Heart right ventricle (tissue), 16 donors: ENCODE measurements at regions of chr22 and their contacts with region 1.

Region 1: GRCh38 chr22:20298803-20299735 is 20.8 kb downstream of the DGCR6L start:
- DNase-seq: peak; percentile 81 to 86
- ATAC-seq: peak; percentile 84 to 92 (median 90)
- H3K4me3 ChIP-seq: peak overlapping the region; percentile 22 to 70 (median 58)
- H3K27ac ChIP-seq: peak overlapping the region in 1 of 10 donors; percentile 39
- H3K4me1 ChIP-seq: peaks cover 5 to 16% (median 13%) of the 10 kb centered on the region in 9 donors
- H3K27me3 ChIP-seq: peaks cover 8 to 41% (median 17%) of the 10 kb centered on the region in 7 donors
- CTCF ChIP-seq: no peak

Region 2: GRCh38 chr22:20164863-20165262 is 134.2 kb before region 1 on chr22:
- intact Hi-C with region 1: loop called in 1 of 10 experiments (anchors 5 kb)
- DNase-seq: no peak
- ATAC-seq: no peak
- H3K4me3 ChIP-seq: no peak overlapping the region
- H3K27ac ChIP-seq: no peak overlapping the region
- H3K4me1 ChIP-seq: no peaks in the 10 kb centered on the region
- H3K27me3 ChIP-seq: no peaks in the 10 kb centered on the region
- CTCF ChIP-seq: no peak